ENCODE measurements at regions of chr1 and their contacts with region 1.

Region 1: DNA sequence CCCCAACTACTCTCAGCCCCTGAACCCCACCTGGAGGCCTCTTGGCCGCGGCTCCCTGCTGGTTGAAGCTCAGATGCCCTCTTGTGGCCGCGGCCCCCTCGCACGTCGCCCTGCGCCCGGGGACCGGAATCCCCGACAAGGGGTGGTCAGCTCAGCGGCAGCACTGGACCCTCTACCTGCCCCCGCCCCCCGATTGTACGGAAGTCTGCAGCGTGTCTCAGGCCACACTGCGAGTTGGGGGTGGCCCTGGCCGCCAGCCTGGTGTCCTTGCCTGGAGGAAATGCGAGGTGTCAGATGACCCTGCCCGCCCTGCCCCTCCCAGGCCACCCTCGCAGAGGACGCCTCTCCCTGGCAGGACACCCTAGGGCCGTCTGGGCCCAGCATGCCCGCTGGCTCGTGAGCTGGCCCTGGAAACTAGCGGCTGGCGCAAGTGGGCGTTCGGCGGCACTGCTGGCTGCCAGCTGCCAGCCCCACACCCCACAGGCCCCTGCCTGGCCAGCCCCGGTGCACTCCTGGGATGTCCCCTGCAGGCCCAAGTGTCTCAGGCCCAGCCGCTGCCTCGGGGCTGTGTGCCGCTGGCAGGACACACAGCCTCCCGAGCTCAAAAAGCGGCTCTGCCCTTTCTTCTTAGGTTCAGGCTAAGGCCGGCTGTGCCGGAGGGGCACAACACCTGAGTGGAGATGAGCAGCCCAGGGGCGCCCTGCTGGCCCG is 60.8 kb downstream of the EDN2 start:
- DNase-seq: peak; percentile 57 to 78 (median 71)
- ATAC-seq: peak; percentile 73 to 82 (median 76)
- H3K4me3 ChIP-seq: peak overlapping the region in 11 of 12 donors; percentile 8 to 54 (median 47)
- H3K27ac ChIP-seq: peak overlapping the region in 11 of 12 donors; percentile 28 to 82 (median 71)
- H3K4me1 ChIP-seq: peaks cover 0 to 15% (median 7%) of the 10 kb centered on the region in 12 donors
- H3K27me3 ChIP-seq: no peaks in the 10 kb centered on the region
- CTCF ChIP-seq: peak in 11 of 12 donors; percentile 14 to 59 (median 36)
- POLR2A ChIP-seq: no peak

Region 2: GRCh38 chr1:41259221-41259620 is 164.4 kb before region 1 on chr1:
- intact Hi-C with region 1: loop called in 1 of 10 experiments (anchors 2 kb)
- DNase-seq: no peak
- ATAC-seq: no peak
- H3K4me3 ChIP-seq: no peak overlapping the region
- H3K27ac ChIP-seq: no peak overlapping the region
- H3K4me1 ChIP-seq: peaks cover 0 to 6% (median 0%) of the 10 kb centered on the region in 12 donors
- H3K27me3 ChIP-seq: no peaks in the 10 kb centered on the region
- CTCF ChIP-seq: no peak
- POLR2A ChIP-seq: no peak

Measured in heart left ventricle (tissue), 16 donors.